WTC11 (cell line): ENCODE measurements at regions of chr17 and their contacts with region 1.

Region 1: GRCh38 chr17:17812211-17813057 is 24.4 kb downstream of the SREBF1 start:
- DNase-seq: peak; percentile 93
- ATAC-seq: peak; percentile 29
- H3K4me3 Mint-ChIP-seq: peak overlapping the region; percentile 33
- H3K27ac Mint-ChIP-seq: peak overlapping the region; percentile 94; the same call in 1 of the 2 replicates
- H3K4me1 Mint-ChIP-seq: peaks cover 22% of the 10 kb centered on the region
- H3K27me3 Mint-ChIP-seq: peaks cover 16% of the 10 kb centered on the region
- CTCF ChIP-seq: peak; percentile 100

Region 2: DNA sequence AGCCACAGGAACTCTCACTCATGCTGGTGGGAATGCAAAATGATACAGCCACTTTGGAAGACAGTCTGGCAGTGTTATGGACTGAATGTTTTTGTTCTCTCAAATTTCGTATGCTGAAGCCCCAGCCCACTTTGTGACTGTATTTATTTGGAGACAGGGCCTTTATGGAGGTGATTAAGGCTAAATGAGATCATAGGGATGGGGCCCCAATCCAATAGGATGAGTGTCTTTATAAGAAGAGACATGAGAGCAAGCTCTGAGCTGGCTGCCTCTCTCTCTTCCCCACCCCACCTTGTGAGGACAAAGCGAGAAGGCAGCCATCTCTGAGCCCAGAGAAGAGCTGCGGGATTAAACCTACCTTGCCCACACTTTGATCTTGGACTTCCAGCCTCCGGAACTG is 153.1 kb before region 1 on chr17:
- CTCF ChIA-PET with region 1: no interaction called
- POLR2A ChIA-PET with region 1: no interaction called
- DNase-seq: no peak
- ATAC-seq: no peak
- H3K4me3 Mint-ChIP-seq: no peak overlapping the region
- H3K27ac Mint-ChIP-seq: no peak overlapping the region
- H3K4me1 Mint-ChIP-seq: peaks cover 8% of the 10 kb centered on the region
- H3K27me3 Mint-ChIP-seq: peaks cover 25% of the 10 kb centered on the region
- CTCF ChIP-seq: no peak

Region 3: GRCh38 chr17:17681187-17681848 is 131.1 kb before region 1 on chr17 and contains the start of gene RAI1:
- CTCF ChIA-PET with region 1: interaction called, 13 read pairs
- POLR2A ChIA-PET with region 1: no interaction called
- DNase-seq: peak; percentile 54
- ATAC-seq: peak; percentile 44
- H3K4me3 Mint-ChIP-seq: peak within 1 kb of the TSS; percentile 66
- H3K27ac Mint-ChIP-seq: no peak within 1 kb of the TSS
- H3K4me1 Mint-ChIP-seq: peaks cover 42% of the 10 kb centered on the region
- H3K27me3 Mint-ChIP-seq: peaks cover 87% of the 10 kb centered on the region
- CTCF ChIP-seq: peak; percentile 58; the same call in 1 of the 2 replicates
- total RNA-seq, gene RAI1: 7.3 to 12.7 TPM (median 8.1 TPM) in 3 replicates

Region 4: DNA sequence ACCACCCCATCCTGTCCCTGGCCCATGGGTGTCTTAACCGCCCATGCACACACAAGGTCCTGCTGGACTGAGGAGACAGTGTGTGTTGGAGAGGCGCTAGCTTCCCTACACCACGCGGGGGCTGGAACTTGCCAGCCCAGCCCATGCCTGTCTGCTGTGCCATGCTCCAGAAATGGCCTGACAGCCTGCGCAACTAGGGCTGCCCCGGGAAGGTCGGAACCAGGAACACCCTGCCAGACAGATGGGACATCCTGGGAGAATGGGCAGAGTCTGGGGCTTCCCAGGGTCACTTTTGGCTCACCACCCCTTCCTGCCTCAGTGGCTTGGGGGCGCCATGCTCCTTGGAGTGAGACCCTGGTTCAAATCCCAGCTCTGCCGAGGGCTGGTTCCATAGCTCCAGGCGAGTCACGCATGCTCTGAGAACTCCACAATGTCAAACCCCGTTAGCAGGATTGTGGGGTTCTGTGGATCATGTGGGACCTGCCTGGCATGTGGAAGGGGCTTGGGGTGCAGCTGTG is 11.9 kb before region 1 on chr17:
- CTCF ChIA-PET with region 1: interaction called, 13 read pairs
- POLR2A ChIA-PET with region 1: interaction called, 3 read pairs
- DNase-seq: no peak
- ATAC-seq: peak; percentile 26
- H3K4me3 Mint-ChIP-seq: no peak overlapping the region
- H3K27ac Mint-ChIP-seq: no peak overlapping the region
- H3K4me1 Mint-ChIP-seq: peaks cover 13% of the 10 kb centered on the region
- H3K27me3 Mint-ChIP-seq: no peaks in the 10 kb centered on the region; the same call in 1 of the 2 replicates
- CTCF ChIP-seq: no peak

Region 5: DNA sequence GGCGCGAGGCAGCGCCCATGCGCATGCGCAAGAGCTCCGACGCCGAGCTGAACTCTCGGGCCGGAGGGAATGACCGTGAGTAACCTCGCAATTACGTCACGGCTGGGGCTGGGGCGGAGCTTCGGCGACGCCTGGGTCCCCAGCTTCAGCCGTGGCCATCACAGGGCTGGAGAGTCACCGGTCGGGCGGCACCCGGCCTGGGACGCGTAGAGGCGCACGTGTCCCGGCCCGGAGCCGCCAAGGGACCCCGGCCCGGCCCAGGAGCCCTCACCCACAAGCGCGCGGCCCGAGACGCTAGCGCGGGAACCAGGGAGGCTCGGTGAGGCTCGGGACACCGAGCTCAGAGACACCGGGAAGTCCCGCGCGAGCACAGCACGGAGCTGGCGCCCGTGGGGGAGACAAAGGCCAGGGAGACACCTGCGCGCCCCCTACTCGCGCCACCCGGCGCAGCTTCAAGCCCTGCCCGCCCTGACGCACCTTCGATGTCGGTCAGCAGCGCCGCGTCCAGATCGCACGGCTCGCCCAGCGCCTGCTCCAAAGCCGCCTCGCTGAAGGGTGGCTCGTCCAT is 23.9 kb after region 1 on chr17:
- CTCF ChIA-PET with region 1: interaction called, 16 read pairs
- POLR2A ChIA-PET with region 1: interaction called, 34 read pairs
- DNase-seq: peak; percentile 98
- ATAC-seq: peak; percentile 53
- H3K4me3 Mint-ChIP-seq: peak overlapping the region; percentile 69
- H3K27ac Mint-ChIP-seq: peak overlapping the region; percentile 94
- H3K4me1 Mint-ChIP-seq: peaks cover 70% of the 10 kb centered on the region
- H3K27me3 Mint-ChIP-seq: no peaks in the 10 kb centered on the region
- CTCF ChIP-seq: no peak

Region 6: GRCh38 chr17:17868641-17869522 is 56.4 kb after region 1 on chr17:
- CTCF ChIA-PET with region 1: interaction called, 22 read pairs
- POLR2A ChIA-PET with region 1: no interaction called
- DNase-seq: no peak
- ATAC-seq: peak; percentile 80
- H3K4me3 Mint-ChIP-seq: peak overlapping the region; percentile 41
- H3K27ac Mint-ChIP-seq: peak overlapping the region; percentile 71
- H3K4me1 Mint-ChIP-seq: peaks cover 54% of the 10 kb centered on the region
- H3K27me3 Mint-ChIP-seq: peaks cover 16% of the 10 kb centered on the region
- CTCF ChIP-seq: no peak